ENCODE measurements at regions of chr12 and their contacts with region 1.

Region 1: DNA sequence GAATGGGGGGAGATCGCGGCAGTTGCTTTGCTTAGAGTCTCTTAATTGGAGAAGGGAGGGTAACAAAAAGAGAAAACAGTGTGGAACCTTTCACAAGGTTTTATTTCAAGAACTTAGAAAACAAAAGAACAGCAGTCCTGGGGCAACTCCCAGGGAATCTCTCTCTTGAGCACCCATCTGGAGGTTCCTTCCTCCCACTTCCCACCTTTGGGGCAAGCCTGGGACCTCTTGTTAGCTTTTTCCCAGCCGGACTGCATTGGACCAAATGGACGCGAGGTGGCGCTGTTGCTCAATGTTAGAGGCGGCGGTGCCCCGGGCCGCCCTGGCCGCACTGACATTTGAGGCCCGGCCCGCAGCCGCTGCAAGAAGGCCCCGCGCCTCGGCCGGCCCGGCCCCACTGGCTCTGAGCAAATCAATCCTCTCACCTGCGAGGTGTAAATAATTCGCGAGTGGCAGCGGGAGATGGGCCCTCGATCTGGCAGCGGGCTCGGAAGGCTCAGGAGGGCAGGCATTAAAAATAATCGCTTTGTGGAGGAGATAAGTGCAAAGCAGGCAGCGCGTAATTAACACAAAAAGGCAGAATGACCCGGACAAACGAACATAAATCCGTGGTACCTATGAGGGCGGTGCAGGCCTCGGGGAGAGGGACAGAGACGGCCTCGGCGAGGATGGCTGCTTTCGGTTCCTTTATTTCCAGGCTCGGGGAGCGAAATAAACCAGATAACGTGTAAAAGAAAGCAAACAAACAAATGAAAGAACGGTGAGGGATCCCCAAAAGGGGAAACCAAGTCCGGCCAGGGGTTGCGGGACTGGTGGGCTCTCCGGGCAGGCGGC is 2.7 kb upstream of the HOXC8 start:
- DNase-seq: peak; percentile 72 to 98 (median 90)
- ATAC-seq: peak; percentile 84 to 96 (median 92)
- H3K4me3 ChIP-seq: peak overlapping the region in 2 of 4 donors; percentile 9 to 34
- H3K27ac ChIP-seq: no peak overlapping the region
- H3K4me1 ChIP-seq: peaks cover 0 to 5% (median 5%) of the 10 kb centered on the region in 3 donors
- H3K27me3 ChIP-seq: peaks cover 0 to 64% (median 5%) of the 10 kb centered on the region in 4 donors
- CTCF ChIP-seq: peak; percentile 89 to 96 (median 92)

Region 2: GRCh38 chr12:53757095-53757770 is 248.8 kb before region 1 on chr12:
- intact Hi-C with region 1: no loop called
- DNase-seq: peak; percentile 76 to 95 (median 90)
- ATAC-seq: peak; percentile 78 to 95 (median 90)
- H3K4me3 ChIP-seq: no peak overlapping the region
- H3K27ac ChIP-seq: peak overlapping the region in 1 of 4 donors; percentile 17
- H3K4me1 ChIP-seq: peaks cover 0 to 4% (median 0%) of the 10 kb centered on the region in 3 donors
- H3K27me3 ChIP-seq: no peaks in the 10 kb centered on the region
- CTCF ChIP-seq: peak; percentile 94 to 96 (median 94)

Region 3: DNA sequence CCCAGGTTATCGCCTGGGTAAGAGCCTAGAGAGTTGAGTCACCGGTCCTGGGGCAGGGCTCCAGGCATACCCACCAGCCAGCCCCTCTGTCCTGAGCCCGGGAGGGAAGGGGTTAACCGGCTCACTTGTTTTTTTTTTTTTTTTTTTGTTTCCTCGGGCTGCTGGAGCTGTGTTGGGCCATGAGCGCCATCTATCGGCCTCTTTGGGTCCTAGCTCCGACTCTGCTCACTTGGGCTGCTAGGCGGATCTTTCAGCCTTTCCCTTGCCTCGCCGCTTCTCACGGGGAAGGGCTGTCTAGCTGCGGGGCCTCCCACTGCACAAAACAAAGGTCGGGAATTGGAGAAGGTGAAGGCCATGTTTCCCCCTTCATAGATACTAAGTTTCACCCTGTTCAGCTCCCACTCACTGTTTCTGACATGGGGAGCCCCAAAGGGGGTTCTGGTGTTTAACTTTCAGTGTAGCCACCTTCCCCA is 185.5 kb after region 1 on chr12:
- intact Hi-C with region 1: loop called in 2 of 3 experiments (anchors 5 to 10 kb)
- DNase-seq: peak; percentile 71 to 89 (median 80)
- ATAC-seq: peak; percentile 60 to 82 (median 80)
- H3K4me3 ChIP-seq: no peak overlapping the region
- H3K27ac ChIP-seq: no peak overlapping the region
- H3K4me1 ChIP-seq: peaks cover 0 to 3% (median 0%) of the 10 kb centered on the region in 3 donors
- H3K27me3 ChIP-seq: no peaks in the 10 kb centered on the region
- CTCF ChIP-seq: peak; percentile 71 to 83 (median 80)

Region 4: DNA sequence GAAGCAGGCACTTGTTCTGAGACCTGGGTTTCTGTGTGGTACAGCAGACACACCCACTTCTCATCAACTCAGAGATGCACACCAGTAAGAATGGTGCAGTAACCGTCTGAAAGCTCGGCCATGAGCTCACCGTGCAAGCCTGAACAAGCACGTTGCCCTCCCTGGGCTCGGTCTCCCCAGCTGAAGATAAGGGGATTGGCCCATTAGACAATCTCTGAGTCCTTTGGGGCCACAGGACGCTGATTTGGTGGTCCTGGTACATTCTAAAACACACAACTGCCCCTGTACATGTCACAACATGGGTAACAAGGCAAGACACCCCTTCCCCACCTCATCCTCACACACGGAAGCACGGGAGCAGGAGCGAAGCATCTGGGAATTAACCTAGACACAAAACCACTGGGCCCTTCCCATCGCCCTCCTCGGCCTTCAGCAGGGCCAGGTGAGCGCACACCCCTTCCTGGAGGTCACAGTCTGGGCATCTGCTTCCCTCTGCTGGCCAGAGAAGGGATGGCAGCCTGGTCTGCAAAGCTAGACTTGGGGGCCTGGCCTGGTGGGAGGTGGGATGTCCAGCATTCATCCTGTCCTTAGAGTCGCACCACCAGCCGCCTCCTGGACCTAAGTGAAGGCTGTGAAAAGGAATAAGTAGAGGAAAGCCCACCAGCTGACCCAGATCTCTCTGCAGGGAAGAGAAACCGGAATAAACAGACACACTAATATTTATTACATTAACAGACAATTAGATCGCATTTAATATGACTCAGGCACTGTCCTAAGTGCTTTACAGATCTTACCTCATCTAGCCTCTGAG is 201.6 kb after region 1 on chr12:
- intact Hi-C with region 1: loop called in 1 of 3 experiments (anchors 5 kb)
- DNase-seq: peak; percentile 65 to 91 (median 83)
- ATAC-seq: peak; percentile 86 to 98 (median 93)
- H3K4me3 ChIP-seq: no peak overlapping the region
- H3K27ac ChIP-seq: no peak overlapping the region
- H3K4me1 ChIP-seq: no peaks in the 10 kb centered on the region
- H3K27me3 ChIP-seq: peaks cover 0 to 10% (median 0%) of the 10 kb centered on the region in 4 donors
- CTCF ChIP-seq: peak; percentile 82 to 92 (median 90)